Endothelial cell of umbilical vein (primary cell): ENCODE measurements at regions of chr1 and their contacts with region 1.

Region 1: DNA sequence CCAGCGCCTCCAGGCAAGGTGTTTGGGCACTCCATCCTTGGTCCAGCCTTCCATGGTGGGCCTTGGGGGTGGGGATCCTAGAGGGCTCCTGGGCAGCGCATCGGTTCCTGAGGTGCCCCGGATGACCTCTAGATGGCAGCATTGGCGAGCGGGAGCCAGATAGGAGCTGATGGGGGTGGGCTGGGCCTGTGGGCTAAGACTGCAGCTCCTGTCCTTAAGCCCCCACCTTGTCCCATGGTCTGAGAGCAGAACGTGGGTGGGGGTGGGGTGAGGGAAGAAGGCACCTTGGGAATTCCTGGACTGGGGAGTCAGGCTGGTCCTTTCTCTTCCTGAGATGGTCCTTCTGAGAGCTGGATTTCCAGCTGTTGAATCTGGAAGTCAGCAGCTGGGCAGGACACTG is 93.4 kb upstream of the CSF3R start:
- DNase-seq: peak; percentile 49
- H3K4me3 ChIP-seq: no peak overlapping the region
- H3K27ac ChIP-seq: no peak overlapping the region
- H3K4me1 ChIP-seq: no peaks in the 10 kb centered on the region
- H3K27me3 ChIP-seq: no peaks in the 10 kb centered on the region
- CTCF ChIP-seq: peak; percentile 71 to 93
- POLR2A ChIP-seq: no peak

Region 2: DNA sequence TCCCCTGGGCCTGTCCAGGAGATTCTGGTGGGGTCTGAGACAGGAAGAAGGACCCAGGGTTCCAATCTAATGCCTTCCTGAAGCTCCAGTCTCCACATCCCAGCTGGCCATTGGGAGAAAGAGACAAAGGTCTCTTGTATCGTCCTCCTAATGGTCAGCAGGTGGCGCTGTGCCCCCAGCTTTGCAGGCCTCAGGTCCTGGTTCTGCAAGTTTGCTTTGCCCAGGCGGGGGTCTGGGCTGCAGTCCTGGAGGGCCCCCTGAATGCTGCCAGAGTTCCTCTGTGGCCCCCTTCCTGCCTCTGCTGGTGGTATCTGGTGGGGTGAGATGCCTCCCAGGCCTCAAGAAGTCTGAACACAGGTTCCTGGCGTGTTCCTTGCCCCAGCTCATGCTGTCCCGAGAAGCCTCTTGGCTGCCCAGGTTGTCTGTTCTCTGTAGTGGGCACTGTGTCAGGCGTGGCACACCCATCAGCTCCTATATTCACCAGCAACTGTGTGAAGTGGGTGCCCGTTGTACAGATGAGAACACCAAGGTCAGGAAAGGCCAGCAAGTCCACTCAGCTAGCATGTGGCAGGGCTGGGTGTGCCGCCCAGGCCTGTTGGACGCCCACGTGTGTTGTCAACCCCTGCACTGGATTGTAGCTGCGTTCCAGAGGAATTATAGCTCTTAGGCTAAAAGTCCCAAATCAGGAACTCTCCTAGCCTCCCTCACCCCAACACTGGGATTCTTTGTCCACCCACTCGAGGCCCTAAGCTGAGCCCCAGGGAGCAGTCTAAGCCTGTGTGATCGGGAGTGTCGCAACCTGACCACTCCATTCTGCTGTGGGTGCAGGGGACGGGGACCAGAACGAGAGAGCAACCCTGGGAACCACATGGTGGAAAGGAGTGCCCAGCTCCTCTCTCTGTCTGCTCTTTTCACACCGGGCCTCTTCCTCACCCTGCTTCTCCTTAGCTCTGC is 59.5 kb before region 1 on chr1:
- CTCF ChIA-PET with region 1: interaction called, 16 read pairs
- POLR2A ChIA-PET with region 1: no interaction called
- dilution Hi-C with region 1: no loop called
- intact Hi-C with region 1: no loop called
- DNase-seq: peak; percentile 43
- H3K4me3 ChIP-seq: no peak overlapping the region
- H3K27ac ChIP-seq: no peak overlapping the region
- H3K4me1 ChIP-seq: no peaks in the 10 kb centered on the region
- H3K27me3 ChIP-seq: peaks cover 0 to 1% of the 10 kb centered on the region in 2 experiments
- CTCF ChIP-seq: peak; percentile 85 to 90
- POLR2A ChIP-seq: no peak

Region 3: GRCh38 chr1:36565576-36566501 is 10.3 kb before region 1 on chr1:
- CTCF ChIA-PET with region 1: interaction called, 18 read pairs
- POLR2A ChIA-PET with region 1: no interaction called
- dilution Hi-C with region 1: no loop called
- intact Hi-C with region 1: no loop called
- DNase-seq: no peak
- H3K4me3 ChIP-seq: no peak overlapping the region
- H3K27ac ChIP-seq: no peak overlapping the region
- H3K4me1 ChIP-seq: no peaks in the 10 kb centered on the region
- H3K27me3 ChIP-seq: no peaks in the 10 kb centered on the region
- CTCF ChIP-seq: no peak
- POLR2A ChIP-seq: no peak

Region 4: DNA sequence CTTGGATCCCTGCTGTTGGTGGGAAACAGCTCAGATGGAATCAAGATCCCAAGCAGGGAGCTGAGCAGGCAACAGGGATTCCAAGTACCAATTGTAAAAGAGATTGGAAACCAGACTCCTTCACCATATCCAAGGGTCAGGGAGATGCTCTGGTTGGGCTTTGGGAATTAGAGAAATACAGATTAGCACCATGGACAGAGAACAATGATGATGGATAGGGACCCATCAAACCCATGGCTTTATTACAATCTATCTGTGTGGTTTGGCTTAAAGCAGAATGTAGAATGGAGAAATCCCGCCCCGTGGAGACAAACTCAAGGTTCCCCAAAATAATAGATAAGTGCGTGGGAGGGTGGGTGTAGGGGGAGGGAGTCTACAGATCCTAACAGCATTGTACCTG is 27.3 kb after region 1 on chr1:
- CTCF ChIA-PET with region 1: interaction called, 11 read pairs
- POLR2A ChIA-PET with region 1: no interaction called
- dilution Hi-C with region 1: no loop called
- intact Hi-C with region 1: no loop called
- DNase-seq: no peak
- H3K4me3 ChIP-seq: no peak overlapping the region
- H3K27ac ChIP-seq: no peak overlapping the region
- H3K4me1 ChIP-seq: no peaks in the 10 kb centered on the region
- H3K27me3 ChIP-seq: no peaks in the 10 kb centered on the region
- CTCF ChIP-seq: no peak
- POLR2A ChIP-seq: no peak

Region 5: DNA sequence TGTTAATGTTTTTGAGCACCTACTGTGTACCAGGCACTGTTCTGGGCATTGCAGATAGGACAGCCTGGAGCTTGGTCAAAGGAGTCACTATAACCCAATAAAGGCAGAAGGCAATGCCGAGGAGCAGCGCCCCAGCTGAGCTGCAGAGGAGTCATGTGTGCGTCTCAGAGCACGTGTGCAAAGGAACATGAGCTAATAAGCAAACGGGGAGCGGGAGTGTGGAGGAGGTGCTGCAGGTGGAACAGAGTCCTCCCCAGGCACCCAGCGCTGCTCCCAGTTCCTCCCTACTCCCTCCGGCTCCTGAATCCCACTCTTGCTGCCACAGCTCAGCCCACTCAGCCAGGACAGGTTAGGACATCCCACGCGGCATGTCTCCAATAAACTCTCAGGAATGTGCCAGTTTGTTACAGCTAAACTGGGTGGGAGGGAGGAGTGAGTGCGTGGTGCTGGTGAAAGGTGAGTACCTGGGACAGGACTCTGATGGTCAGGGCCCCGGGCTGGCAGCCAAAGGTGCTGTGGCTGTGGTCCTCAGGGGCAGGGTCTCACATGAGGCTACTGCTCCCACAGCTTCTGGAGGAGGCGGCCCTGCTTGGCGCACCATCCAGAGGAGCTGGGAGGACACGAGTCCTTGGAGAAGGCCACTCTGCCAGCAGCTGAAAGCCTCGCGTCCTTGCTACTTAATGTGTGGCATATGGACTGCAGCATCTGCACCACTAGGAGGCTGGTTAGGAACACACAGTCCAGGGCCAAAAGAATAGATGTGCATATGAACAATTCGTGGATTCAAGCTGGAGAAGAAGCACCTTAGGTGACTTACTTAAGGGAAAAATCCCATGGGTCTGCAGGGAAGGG is 405.9 kb after region 1 on chr1:
- CTCF ChIA-PET with region 1: no interaction called
- POLR2A ChIA-PET with region 1: no interaction called
- dilution Hi-C with region 1: no loop called
- intact Hi-C with region 1: no loop called
- DNase-seq: no peak
- H3K4me3 ChIP-seq: no peak overlapping the region
- H3K27ac ChIP-seq: no peak overlapping the region
- H3K4me1 ChIP-seq: no peaks in the 10 kb centered on the region
- H3K27me3 ChIP-seq: no peaks in the 10 kb centered on the region
- CTCF ChIP-seq: no peak
- POLR2A ChIP-seq: no peak

Region 6: DNA sequence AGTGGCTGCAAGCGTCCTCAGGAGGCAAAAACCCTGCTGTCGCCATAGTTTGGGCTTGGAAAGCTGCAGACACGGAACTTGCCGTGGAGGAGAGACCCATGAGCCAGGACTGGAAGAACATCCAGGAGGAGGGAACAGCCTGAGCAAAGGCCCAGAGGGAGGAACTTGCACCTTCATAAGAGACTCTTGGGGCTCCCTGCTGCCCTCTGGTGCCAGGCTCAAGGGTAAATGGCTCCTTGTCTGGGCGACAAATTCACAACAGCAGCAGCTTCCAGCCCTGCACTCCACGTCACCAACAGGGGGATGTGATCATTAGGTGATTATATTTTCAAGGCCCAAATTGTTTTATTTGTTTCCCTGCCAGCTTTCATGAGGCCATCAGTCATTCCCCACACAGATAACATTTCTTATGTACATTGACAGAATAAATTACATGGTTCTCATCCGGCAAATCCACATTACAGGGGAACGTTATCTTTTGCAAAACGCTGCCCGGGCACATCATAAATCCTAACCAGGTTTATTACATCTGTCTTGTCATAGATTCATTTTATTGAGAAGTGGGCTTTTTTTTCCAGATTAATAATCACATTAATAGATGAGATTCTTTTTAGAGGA is 601.2 kb after region 1 on chr1:
- CTCF ChIA-PET with region 1: interaction called, 3 read pairs
- POLR2A ChIA-PET with region 1: no interaction called
- dilution Hi-C with region 1: no loop called
- intact Hi-C with region 1: loop called (anchors 5 kb)
- DNase-seq: peak; percentile 21
- H3K4me3 ChIP-seq: no peak overlapping the region
- H3K27ac ChIP-seq: no peak overlapping the region
- H3K4me1 ChIP-seq: no peaks in the 10 kb centered on the region
- H3K27me3 ChIP-seq: no peaks in the 10 kb centered on the region
- CTCF ChIP-seq: peak; percentile 27 to 35
- POLR2A ChIP-seq: no peak

Region 7: DNA sequence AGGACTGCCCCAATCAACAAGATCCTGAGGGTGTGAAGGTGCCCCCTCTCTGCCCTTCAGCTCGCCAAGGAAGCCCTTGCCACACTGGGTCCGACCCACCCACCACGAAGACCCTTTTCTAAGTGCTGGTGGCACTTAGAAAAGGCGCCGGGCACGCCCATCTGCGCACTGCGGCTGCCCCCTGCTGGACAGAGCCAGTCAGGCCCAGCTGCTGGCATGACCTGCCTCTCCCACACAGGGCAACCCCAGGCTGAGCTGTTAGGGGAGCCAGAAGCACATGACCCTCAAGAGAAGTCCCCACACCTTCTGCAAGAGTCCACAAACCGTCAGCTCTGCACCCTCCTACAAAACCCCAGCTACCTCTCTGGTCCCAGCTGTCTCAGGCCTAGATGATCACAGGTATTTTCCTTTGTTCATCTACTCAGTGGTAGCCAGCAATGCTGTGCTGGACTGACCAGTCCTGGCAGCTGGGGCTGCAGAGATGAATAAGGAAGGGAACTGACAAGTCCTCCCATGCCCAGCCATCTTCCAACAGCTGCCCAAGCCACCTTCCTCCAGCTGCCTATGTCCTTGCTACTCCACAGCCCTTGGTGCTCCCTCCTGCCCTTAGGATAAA is 858.3 kb after region 1 on chr1:
- CTCF ChIA-PET with region 1: interaction called, 72 read pairs
- POLR2A ChIA-PET with region 1: no interaction called
- dilution Hi-C with region 1: no loop called
- intact Hi-C with region 1: loop called (anchors 1 kb)
- DNase-seq: peak; percentile 48
- H3K4me3 ChIP-seq: no peak overlapping the region
- H3K27ac ChIP-seq: no peak overlapping the region
- H3K4me1 ChIP-seq: no peaks in the 10 kb centered on the region
- H3K27me3 ChIP-seq: no peaks in the 10 kb centered on the region
- CTCF ChIP-seq: peak; percentile 93 to 99
- POLR2A ChIP-seq: no peak